Calu3 (cell line): ENCODE measurements at regions of chr1 and their contacts with region 1.

Region 1: GRCh38 chr1:114346480-114347029 is 164.4 kb downstream of the TRIM33 start:
- DNase-seq: peak; percentile 93
- H3K4me3 Mint-ChIP-seq: peak overlapping the region; percentile 84
- H3K27ac Mint-ChIP-seq: peak overlapping the region; percentile 52
- H3K4me1 Mint-ChIP-seq: peaks cover 8% of the 10 kb centered on the region
- H3K27me3 Mint-ChIP-seq: peaks cover 24% of the 10 kb centered on the region
- CTCF ChIP-seq: peak; percentile 95

Region 2: DNA sequence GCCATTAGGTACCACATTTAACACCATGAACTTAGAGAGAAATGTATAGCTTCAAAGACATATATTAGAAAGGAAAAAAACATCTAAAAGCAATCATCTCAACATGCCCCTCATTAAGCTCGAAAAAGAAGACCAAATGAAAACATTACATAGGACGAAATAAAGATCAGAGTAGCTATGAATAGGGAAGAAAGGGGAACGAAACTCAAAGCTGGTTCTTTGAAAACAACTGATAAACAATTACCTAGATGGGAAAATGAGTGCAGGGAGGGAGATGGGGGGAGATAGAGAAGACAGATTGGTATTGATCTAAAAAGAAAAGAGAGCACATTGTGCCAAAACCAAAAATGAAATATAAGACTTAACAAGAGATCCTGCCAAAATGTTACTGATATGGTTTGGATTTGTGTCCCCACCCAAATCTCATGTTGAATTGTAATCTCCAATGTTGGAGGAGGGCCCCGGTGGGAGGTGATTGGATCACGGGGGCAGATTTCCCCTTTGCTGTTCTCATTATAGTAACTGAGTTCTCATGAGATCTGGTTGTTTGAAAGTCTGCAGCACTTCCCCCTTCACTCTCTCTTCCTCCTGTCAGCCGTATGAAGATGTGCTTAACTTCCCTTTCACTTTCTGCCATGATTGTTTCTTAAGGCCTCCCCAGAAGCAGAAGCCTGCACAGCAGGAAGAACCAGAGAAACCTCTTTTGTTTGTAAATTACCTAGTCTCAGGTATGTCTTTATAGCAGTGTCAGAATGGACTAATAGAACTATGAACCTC is 135.8 kb after region 1 on chr1:
- CTCF ChIA-PET with region 1: no interaction called
- intact Hi-C with region 1: no loop called
- DNase-seq: no peak
- H3K4me3 Mint-ChIP-seq: no peak overlapping the region
- H3K27ac Mint-ChIP-seq: peak overlapping the region; percentile 35
- H3K4me1 Mint-ChIP-seq: peaks cover 34% of the 10 kb centered on the region
- H3K27me3 Mint-ChIP-seq: no peaks in the 10 kb centered on the region
- CTCF ChIP-seq: no peak

Region 3: DNA sequence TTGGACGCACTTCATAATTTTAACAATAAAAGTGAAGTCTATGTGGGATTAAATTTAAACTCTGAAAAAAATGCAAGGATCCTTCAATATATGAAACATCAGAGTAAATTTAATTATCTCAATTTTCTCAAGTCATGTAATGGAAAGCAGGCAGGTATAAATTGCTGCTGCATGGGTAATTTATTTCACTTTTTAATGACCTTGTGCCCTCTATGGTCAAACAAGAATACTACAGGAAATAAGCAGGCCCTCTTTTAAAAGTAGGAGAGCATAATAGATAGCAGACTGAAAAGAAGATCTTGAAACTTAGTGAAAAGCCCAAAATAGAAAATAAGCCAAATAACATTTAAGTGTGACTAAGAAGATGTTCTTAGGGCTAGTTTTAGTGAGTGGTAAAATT is 212.0 kb after region 1 on chr1:
- CTCF ChIA-PET with region 1: no interaction called
- intact Hi-C with region 1: loop called (anchors 2 kb)
- DNase-seq: no peak
- H3K4me3 Mint-ChIP-seq: no peak overlapping the region
- H3K27ac Mint-ChIP-seq: no peak overlapping the region
- H3K4me1 Mint-ChIP-seq: no peaks in the 10 kb centered on the region
- H3K27me3 Mint-ChIP-seq: no peaks in the 10 kb centered on the region
- CTCF ChIP-seq: no peak